ENCODE measurements at regions of chr12 and their contacts with region 1.

Region 1: DNA sequence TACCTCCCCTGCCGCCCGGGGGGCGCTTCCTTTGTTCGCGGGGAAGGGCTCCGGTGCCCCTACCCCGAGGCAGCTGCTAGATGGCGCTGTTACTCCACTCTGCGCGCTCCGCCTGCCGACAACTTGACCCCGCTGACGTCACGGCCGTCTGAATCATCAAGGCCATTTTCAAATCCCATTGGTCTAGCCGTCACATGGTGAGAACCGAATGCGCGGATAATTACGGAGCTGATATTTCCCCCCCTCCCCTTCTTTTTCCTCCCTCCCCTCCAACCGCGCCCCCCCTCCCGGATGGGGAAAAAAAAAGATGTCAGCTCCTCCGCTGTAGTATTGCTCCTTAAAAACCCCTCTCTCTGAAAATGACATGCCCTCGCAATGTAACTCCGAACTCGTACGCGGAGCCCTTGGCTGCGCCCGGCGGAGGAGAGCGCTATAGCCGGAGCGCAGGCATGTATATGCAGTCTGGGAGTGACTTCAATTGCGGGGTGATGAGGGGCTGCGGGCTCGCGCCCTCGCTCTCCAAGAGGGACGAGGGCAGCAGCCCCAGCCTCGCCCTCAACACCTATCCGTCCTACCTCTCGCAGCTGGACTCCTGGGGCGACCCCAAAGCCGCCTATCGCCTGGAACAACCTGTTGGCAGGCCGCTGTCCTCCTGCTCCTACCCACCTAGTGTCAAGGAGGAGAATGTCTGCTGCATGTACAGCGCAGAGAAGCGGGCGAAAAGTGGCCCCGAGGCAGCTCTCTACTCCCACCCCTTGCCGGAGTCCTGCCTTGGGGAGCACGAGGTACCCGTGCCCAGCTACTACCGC is at the start of gene HOXC10:
- DNase-seq: peak in 1 of 2 experiments; percentile 93
- H3K4me3 ChIP-seq: peak within 1 kb of the TSS in 1 of 4 experiments; percentile 38; a peak in 2 of 8 replicates
- H3K27ac ChIP-seq: no peak within 1 kb of the TSS
- H3K4me1 ChIP-seq: peaks cover 0 to 6% (median 3%) of the 10 kb centered on the region in 4 experiments; a peak in 3 of 7 replicates
- H3K27me3 ChIP-seq: peaks cover 92 to 99% (median 97%) of the 10 kb centered on the region in 4 experiments
- CTCF ChIP-seq: peak; percentile 84 to 97 (median 89)
- EP300 ChIP-seq: 0 out of 3 replicates have a peak, but pooled peaks of 1 of the 2 experiments have one; percentile 18
- POLR2A ChIP-seq: no peak
- RAD21 ChIP-seq: peak; percentile 87 to 89
- total RNA-seq, gene HOXC10: not detected in 2 replicates

Region 2: DNA sequence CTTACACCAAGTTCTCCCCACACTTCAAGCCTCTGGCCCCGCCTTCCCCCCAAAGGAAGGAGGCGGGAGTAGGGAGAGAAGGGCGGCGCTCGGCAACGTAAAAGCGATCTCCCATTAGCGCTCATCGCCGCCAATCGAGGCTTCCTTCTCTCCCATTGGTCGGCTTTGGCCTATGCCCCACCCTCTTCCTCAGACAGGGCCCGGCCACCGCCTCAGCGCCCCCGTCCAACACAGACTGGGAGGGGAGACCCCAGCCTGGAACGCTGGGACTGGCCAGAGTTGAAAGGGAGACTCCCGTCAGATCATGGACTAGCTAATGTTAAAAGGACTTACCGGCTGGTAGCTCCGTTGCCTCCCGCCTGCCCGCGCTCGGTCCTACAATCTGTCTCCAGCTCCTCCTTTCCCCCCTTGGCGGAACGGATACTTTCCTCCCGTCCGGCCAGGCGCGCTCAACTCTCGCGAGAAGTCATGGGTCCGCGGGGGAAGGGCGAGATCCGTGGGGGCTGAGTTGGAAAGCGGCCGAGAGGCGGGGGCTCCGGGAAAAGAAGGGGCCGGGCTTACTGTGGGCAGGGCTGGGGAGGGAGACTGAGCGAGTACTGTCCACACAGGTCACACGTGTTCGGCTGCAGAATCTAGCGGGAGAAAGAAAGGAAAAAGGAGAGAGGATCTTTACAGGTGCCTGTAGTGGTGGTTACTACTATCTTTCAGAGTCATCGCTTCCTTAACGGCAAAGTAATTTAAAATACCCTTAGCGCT is 359.0 kb before region 1 on chr12 and contains the start of gene ATF7:
- CTCF ChIA-PET with region 1: no interaction called
- POLR2A ChIA-PET with region 1: no interaction called
- DNase-seq: peak; percentile 97 to 99
- H3K4me3 ChIP-seq: peak within 1 kb of the TSS; percentile 70 to 94 (median 80)
- H3K27ac ChIP-seq: peak within 1 kb of the TSS; percentile 98
- H3K4me1 ChIP-seq: peaks cover 0 to 7% (median 3%) of the 10 kb centered on the region in 4 experiments; a peak in 4 of 7 replicates
- H3K27me3 ChIP-seq: no peaks in the 10 kb centered on the region
- CTCF ChIP-seq: no peak
- EP300 ChIP-seq: peak in 1 of 2 experiments; percentile 96; a peak in 2 of 3 replicates
- POLR2A ChIP-seq: peak; percentile 78 to 87
- RAD21 ChIP-seq: 0 out of 4 replicates have a peak, but pooled peaks of 1 of the 2 experiments have one; percentile 1
- total RNA-seq, gene ATF7: 16.6 and 18.4 TPM in 2 replicates

Region 3: GRCh38 chr12:53952871-53953734 is 32.0 kb before region 1 on chr12:
- CTCF ChIA-PET with region 1: interaction called, 40 read pairs
- POLR2A ChIA-PET with region 1: no interaction called
- DNase-seq: peak in 1 of 2 experiments; percentile 81
- H3K4me3 ChIP-seq: peak overlapping the region in 1 of 4 experiments; percentile 6; a peak in 1 of 8 replicates
- H3K27ac ChIP-seq: no peak overlapping the region
- H3K4me1 ChIP-seq: peaks cover 0 to 19% (median 4%) of the 10 kb centered on the region in 4 experiments; a peak in 6 of 7 replicates
- H3K27me3 ChIP-seq: peaks cover 100% of the 10 kb centered on the region in 4 experiments
- CTCF ChIP-seq: no peak
- EP300 ChIP-seq: no peak
- POLR2A ChIP-seq: no peak
- RAD21 ChIP-seq: no peak

Region 4: GRCh38 chr12:53973093-53974042 is 11.7 kb before region 1 on chr12 and contains the start of gene HOXC11:
- CTCF ChIA-PET with region 1: interaction called, 13 read pairs
- POLR2A ChIA-PET with region 1: interaction called, 4 read pairs
- DNase-seq: no peak
- H3K4me3 ChIP-seq: peak within 1 kb of the TSS in 2 of 4 experiments; percentile 5 to 50; a peak in 4 of 8 replicates
- H3K27ac ChIP-seq: no peak within 1 kb of the TSS
- H3K4me1 ChIP-seq: peaks cover 0 to 10% (median 4%) of the 10 kb centered on the region in 4 experiments; a peak in 5 of 7 replicates
- H3K27me3 ChIP-seq: peaks cover 99 to 100% (median 100%) of the 10 kb centered on the region in 4 experiments
- CTCF ChIP-seq: no peak
- EP300 ChIP-seq: no peak
- POLR2A ChIP-seq: no peak
- RAD21 ChIP-seq: no peak
- total RNA-seq, gene HOXC11: not detected in 2 replicates

Region 5: GRCh38 chr12:53995378-53996239 is 10.5 kb after region 1 on chr12:
- CTCF ChIA-PET with region 1: interaction called, 91 read pairs
- POLR2A ChIA-PET with region 1: interaction called, 4 read pairs
- DNase-seq: peak in 1 of 2 experiments; percentile 80
- H3K4me3 ChIP-seq: peak overlapping the region in 1 of 4 experiments; percentile 45; a peak in 3 of 8 replicates
- H3K27ac ChIP-seq: no peak overlapping the region
- H3K4me1 ChIP-seq: peaks cover 0 to 17% (median 8%) of the 10 kb centered on the region in 4 experiments; a peak in 5 of 7 replicates
- H3K27me3 ChIP-seq: peaks cover 97 to 100% (median 100%) of the 10 kb centered on the region in 4 experiments
- CTCF ChIP-seq: no peak
- EP300 ChIP-seq: no peak
- POLR2A ChIP-seq: no peak
- RAD21 ChIP-seq: no peak

Region 6: GRCh38 chr12:54005853-54006686 is 21.0 kb after region 1 on chr12:
- CTCF ChIA-PET with region 1: interaction called, 91 read pairs
- POLR2A ChIA-PET with region 1: interaction called, 3 read pairs
- DNase-seq: peak; percentile 50 to 98
- H3K4me3 ChIP-seq: no peak overlapping the region
- H3K27ac ChIP-seq: no peak overlapping the region
- H3K4me1 ChIP-seq: peaks cover 0 to 4% (median 0%) of the 10 kb centered on the region in 4 experiments; a peak in 2 of 7 replicates
- H3K27me3 ChIP-seq: peaks cover 97 to 100% (median 100%) of the 10 kb centered on the region in 4 experiments
- CTCF ChIP-seq: peak; percentile 88 to 97 (median 89)
- EP300 ChIP-seq: no peak
- POLR2A ChIP-seq: no peak
- RAD21 ChIP-seq: peak; percentile 98

Region 7: GRCh38 chr12:54024127-54024526 is 39.0 kb after region 1 on chr12:
- CTCF ChIA-PET with region 1: interaction called, 20 read pairs
- POLR2A ChIA-PET with region 1: interaction called, 4 read pairs
- DNase-seq: no peak
- H3K4me3 ChIP-seq: no peak overlapping the region
- H3K27ac ChIP-seq: no peak overlapping the region
- H3K4me1 ChIP-seq: peaks cover 0 to 6% (median under 1%) of the 10 kb centered on the region in 4 experiments; a peak in 3 of 7 replicates
- H3K27me3 ChIP-seq: peaks cover 97 to 100% (median 100%) of the 10 kb centered on the region in 4 experiments
- CTCF ChIP-seq: no peak
- EP300 ChIP-seq: no peak
- POLR2A ChIP-seq: no peak
- RAD21 ChIP-seq: no peak

Measured in H1 (cell line).